ENCODE measurements at regions of chr2 and their contacts with region 1.

Region 1: DNA sequence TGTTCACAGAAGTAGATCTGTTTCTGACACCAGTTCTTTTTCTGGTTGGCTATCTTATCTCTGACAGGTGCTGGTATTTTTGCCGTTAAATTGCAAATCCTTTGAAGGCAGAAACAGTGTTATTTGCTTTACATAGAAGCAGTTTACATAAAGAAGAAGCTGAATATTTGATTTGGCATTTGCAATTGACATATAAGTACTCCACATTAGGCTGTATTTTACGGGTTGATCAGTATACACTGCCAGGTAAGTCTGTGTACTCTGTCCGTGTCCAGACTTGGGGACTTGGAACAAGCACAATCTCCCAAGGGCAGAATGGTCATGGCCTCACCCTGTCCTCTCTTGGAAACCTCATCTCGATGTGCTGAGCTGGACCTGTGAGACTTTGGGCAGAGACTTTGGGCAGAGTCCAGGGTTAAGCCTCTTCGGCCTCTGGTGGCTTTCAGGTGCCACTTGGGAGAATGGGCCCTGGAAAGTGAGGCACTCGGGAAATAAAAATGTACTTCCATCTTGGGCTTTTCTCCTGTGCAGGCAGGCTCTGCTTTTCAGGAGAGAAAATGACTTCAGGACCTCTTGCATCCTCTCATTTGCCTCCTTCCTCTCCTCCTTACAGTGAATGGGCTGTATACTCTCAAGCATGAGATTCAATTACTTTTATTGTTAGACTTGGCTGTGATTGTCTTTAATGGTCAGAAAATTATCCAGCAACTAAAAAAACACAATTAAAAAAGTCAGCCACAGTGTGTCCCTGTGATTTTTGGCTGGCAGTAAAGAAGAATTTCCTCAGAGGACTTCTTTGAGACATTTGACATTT is 108.5 kb downstream of the RAPGEF4 start:
- DNase-seq: no peak
- H3K4me3 ChIP-seq: no peak overlapping the region
- H3K27ac ChIP-seq: no peak overlapping the region
- H3K4me1 ChIP-seq: peaks cover 8% of the 10 kb centered on the region
- H3K27me3 ChIP-seq: no peaks in the 10 kb centered on the region
- CTCF ChIP-seq: no peak
- POLR2A ChIP-seq: no peak

Region 2: GRCh38 chr2:172021955-172022354 is 822.2 kb before region 1 on chr2:
- intact Hi-C with region 1: loop called (anchors 5 kb)
- DNase-seq: no peak
- H3K4me3 ChIP-seq: no peak overlapping the region
- H3K27ac ChIP-seq: no peak overlapping the region
- H3K4me1 ChIP-seq: no peaks in the 10 kb centered on the region
- H3K27me3 ChIP-seq: no peaks in the 10 kb centered on the region
- CTCF ChIP-seq: no peak
- POLR2A ChIP-seq: no peak

Measured in vagina (tissue), 2 donors.